ENCODE measurements at regions of chr11 and their contacts with region 1.

Region 1: DNA sequence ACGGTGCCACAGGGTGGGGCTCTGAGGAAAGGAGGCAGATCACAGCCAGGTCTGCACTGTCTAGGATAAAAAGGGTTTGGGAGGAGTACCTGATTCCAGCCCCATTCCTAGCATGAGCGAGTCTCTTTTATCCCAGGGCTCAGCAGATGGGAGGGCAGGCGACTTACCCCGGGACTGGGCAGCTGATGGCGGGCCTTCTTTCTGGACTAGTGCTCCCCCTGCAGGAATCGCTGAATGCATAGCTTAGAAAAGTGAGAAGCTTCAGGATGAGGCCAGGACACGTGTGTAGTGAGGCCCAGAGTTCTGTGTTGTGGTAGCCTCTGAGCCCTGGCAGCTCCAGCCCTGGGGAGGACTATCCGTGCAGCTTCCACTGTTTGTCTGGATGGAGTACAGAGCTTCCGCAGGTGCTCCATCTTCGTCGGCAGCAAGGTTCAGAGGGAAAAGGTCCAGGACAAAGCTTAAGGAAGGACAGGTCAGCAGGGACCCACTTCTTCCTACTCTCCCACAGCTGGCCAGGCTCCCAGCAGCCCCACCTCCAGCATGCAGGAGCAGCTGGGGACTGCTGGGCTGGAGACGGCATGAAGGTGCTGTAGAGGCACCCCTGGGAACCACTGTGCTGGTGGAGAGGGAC is 30.4 kb downstream of the COMMD9 start:
- DNase-seq: peak; percentile 69
- H3K4me3 ChIP-seq: no peak overlapping the region
- H3K27ac ChIP-seq: no peak overlapping the region
- H3K4me1 ChIP-seq: no peaks in the 10 kb centered on the region
- H3K27me3 ChIP-seq: peaks cover 0 to 2% of the 10 kb centered on the region in 2 experiments
- CTCF ChIP-seq: peak; percentile 80 to 86
- POLR2A ChIP-seq: no peak

Region 2: GRCh38 chr11:35714882-35715627 is 543.8 kb before region 1 on chr11:
- CTCF ChIA-PET with region 1: interaction called, 6 read pairs
- POLR2A ChIA-PET with region 1: no interaction called
- dilution Hi-C with region 1: no loop called
- intact Hi-C with region 1: loop called (anchors 2 kb)
- DNase-seq: no peak
- H3K4me3 ChIP-seq: no peak overlapping the region
- H3K27ac ChIP-seq: no peak overlapping the region
- H3K4me1 ChIP-seq: no peaks in the 10 kb centered on the region
- H3K27me3 ChIP-seq: no peaks in the 10 kb centered on the region
- CTCF ChIP-seq: no peak
- POLR2A ChIP-seq: no peak

Region 3: DNA sequence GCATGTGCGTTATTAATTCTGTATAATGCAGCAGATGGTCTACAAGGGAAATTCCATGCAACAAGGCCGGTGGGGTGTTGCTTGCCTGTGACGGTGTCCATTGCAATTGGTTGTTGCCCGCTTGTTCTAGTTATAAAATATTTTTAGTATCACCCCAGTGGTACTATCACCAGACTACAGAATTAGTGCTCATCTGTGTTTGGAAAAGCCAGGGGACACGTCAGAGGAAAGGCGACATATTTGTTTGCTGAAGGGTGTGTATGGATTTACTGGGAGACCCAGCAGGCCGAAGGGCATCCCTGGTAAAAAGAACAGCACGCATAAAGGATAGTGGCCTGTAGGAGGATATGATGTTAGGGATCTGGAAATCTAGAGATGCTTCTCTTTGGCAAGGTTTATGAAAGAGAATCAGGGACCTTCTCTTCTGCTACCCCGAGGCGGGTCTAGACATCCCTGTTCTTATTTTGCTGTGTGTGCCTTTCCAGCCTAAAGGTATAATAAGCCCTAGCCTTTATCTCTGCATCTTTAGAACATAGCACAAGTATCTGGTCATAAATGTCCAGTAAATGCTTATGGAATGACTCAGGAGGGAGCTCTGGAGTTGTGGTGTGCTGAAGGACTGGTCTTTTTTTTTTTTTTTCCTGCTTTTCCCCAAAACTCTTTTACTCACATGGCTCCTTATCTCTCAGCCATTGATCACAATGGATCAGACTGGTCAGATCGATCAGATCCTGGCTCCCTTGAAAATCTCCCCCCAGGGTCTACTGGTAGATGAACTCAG is 224.1 kb before region 1 on chr11:
- CTCF ChIA-PET with region 1: interaction called, 11 read pairs
- POLR2A ChIA-PET with region 1: no interaction called
- dilution Hi-C with region 1: no loop called
- intact Hi-C with region 1: no loop called
- DNase-seq: peak; percentile 17
- H3K4me3 ChIP-seq: no peak overlapping the region
- H3K27ac ChIP-seq: no peak overlapping the region
- H3K4me1 ChIP-seq: peaks cover 11% of the 10 kb centered on the region
- H3K27me3 ChIP-seq: no peaks in the 10 kb centered on the region
- CTCF ChIP-seq: no peak
- POLR2A ChIP-seq: no peak

Region 4: DNA sequence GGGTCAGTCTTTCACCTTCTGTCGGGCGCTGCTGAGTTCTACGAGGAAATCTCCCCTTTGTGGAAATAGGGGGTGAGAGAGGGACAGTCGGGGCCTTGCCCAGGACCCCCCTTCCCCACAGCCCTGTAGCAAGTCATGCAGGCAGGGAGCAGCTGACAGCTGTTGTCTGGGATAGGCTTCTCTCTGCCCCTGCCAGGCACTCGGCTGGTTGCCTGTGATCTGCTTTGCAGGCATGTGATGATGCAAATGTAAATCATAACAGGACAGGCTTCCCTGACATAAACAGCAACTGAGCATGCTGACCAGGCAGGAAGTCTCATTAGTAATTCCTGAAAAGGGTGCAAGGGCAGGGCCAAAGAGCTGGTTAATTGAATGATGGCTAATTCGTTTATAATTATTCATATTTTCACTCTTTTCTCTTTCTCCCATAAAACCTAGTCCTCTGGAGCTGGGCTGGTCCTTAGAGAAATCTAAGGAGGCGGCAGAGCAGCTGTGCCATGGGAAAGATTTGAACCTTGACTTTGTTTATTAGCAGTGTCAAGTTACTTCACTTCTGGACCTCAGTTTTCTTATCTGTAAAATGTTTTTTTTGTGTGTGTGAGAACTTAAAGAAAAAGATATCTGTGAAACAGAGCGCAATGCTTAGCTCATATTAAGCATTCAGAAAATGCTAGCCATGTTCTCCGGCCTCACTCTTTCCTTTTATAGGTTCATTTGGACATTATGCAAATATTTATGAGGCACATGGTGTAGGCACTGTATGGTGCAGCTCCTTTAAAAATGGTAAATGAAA is 185.2 kb before region 1 on chr11:
- CTCF ChIA-PET with region 1: interaction called, 19 read pairs
- POLR2A ChIA-PET with region 1: no interaction called
- dilution Hi-C with region 1: no loop called
- intact Hi-C with region 1: no loop called
- DNase-seq: peak; percentile 90
- H3K4me3 ChIP-seq: no peak overlapping the region
- H3K27ac ChIP-seq: peak overlapping the region; percentile 62
- H3K4me1 ChIP-seq: peaks cover 32% of the 10 kb centered on the region
- H3K27me3 ChIP-seq: no peaks in the 10 kb centered on the region
- CTCF ChIP-seq: no peak
- POLR2A ChIP-seq: no peak

Region 5: GRCh38 chr11:36233204-36233603 is 25.6 kb before region 1 on chr11:
- CTCF ChIA-PET with region 1: interaction called, 13 read pairs
- POLR2A ChIA-PET with region 1: no interaction called
- dilution Hi-C with region 1: no loop called
- intact Hi-C with region 1: no loop called
- DNase-seq: peak; percentile 88
- H3K4me3 ChIP-seq: no peak overlapping the region
- H3K27ac ChIP-seq: no peak overlapping the region
- H3K4me1 ChIP-seq: peaks cover 13% of the 10 kb centered on the region
- H3K27me3 ChIP-seq: no peaks in the 10 kb centered on the region
- CTCF ChIP-seq: no peak
- POLR2A ChIP-seq: no peak

Region 6: GRCh38 chr11:36417154-36417553 is 158.3 kb after region 1 on chr11:
- CTCF ChIA-PET with region 1: no interaction called
- POLR2A ChIA-PET with region 1: no interaction called
- dilution Hi-C with region 1: no loop called
- intact Hi-C with region 1: no loop called
- DNase-seq: no peak
- H3K4me3 ChIP-seq: no peak overlapping the region
- H3K27ac ChIP-seq: no peak overlapping the region
- H3K4me1 ChIP-seq: peaks cover 7% of the 10 kb centered on the region
- H3K27me3 ChIP-seq: no peaks in the 10 kb centered on the region
- CTCF ChIP-seq: no peak
- POLR2A ChIP-seq: no peak

Region 7: GRCh38 chr11:36436064-36436463 is 177.2 kb after region 1 on chr11:
- CTCF ChIA-PET with region 1: no interaction called
- POLR2A ChIA-PET with region 1: no interaction called
- dilution Hi-C with region 1: no loop called
- intact Hi-C with region 1: no loop called
- DNase-seq: no peak
- H3K4me3 ChIP-seq: no peak overlapping the region
- H3K27ac ChIP-seq: no peak overlapping the region
- H3K4me1 ChIP-seq: peaks cover 11% of the 10 kb centered on the region
- H3K27me3 ChIP-seq: no peaks in the 10 kb centered on the region
- CTCF ChIP-seq: no peak
- POLR2A ChIP-seq: no peak

Measured in endothelial cell of umbilical vein (primary cell).